ENCODE measurements at regions of chr10 and their contacts with region 1.

Region 1: GRCh38 chr10:6647811-6648526 is 67.9 kb upstream of the PRKCQ start:
- DNase-seq: peak; percentile 60 to 68 (median 63)
- H3K4me3 ChIP-seq: peak overlapping the region in 1 of 7 experiments; percentile 3
- H3K27ac ChIP-seq: no peak overlapping the region
- H3K4me1 ChIP-seq: peaks cover 4 to 30% (median 17%) of the 10 kb centered on the region in 4 experiments
- H3K27me3 ChIP-seq: no peaks in the 10 kb centered on the region

Region 2: DNA sequence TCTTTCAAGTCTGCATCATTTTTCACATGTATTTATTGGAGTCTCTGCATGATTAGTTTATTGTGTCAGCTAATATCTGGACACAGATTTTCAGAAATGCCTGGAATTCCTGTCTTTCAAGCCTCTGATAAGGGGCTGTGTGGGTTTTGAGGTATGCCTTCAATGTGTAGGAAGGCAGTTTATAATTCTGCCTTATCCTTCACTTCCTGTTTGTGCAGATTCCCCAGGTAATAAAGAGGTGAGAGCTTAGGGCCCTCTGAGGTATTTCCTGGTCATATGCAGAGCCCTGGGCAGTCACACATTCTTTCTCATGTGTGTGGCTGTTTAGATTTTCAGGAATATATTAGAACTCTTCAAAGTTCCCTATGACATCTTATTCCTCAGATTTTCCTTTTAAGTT is 11.5 kb after region 1 on chr10:
- CTCF ChIA-PET with region 1: interaction called, 11 read pairs
- POLR2A ChIA-PET with region 1: interaction called, 3 read pairs
- DNase-seq: no peak
- H3K4me3 ChIP-seq: no peak overlapping the region
- H3K27ac ChIP-seq: no peak overlapping the region
- H3K4me1 ChIP-seq: peaks cover 0 to 4% (median under 1%) of the 10 kb centered on the region in 4 experiments
- H3K27me3 ChIP-seq: no peaks in the 10 kb centered on the region

Measured in common myeloid progenitor, CD34-positive (primary cell).